Mammary epithelial cell (primary cell): ENCODE measurements at regions of chrX and their contacts with region 1.

Region 1: GRCh38 chrX:54044126-54044876 is at the start of gene PHF8:
- DNase-seq: peak; percentile 94
- H3K4me3 ChIP-seq: peak within 1 kb of the TSS; percentile 59 to 69 (median 63)
- H3K27ac ChIP-seq: peak within 1 kb of the TSS; percentile 73
- H3K4me1 ChIP-seq: peaks cover 8% of the 10 kb centered on the region
- H3K27me3 ChIP-seq: no peaks in the 10 kb centered on the region
- CTCF ChIP-seq: no peak
- total RNA-seq, gene PHF8: 16.0 to 23.8 TPM

Region 2: GRCh38 chrX:54182864-54183608 is 138.7 kb after region 1 on chrX and contains the start of gene FAM120C:
- CTCF ChIA-PET with region 1: no interaction called
- dilution Hi-C with region 1: no loop called
- in situ Hi-C with region 1: loop called in 1 of 2 experiments (anchors 25 kb)
- intact Hi-C with region 1: loop called (anchors 2 kb)
- DNase-seq: peak; percentile 62
- H3K4me3 ChIP-seq: peak within 1 kb of the TSS; percentile 35 to 74 (median 66)
- H3K27ac ChIP-seq: peak within 1 kb of the TSS; percentile 34
- H3K4me1 ChIP-seq: peaks cover 5% of the 10 kb centered on the region
- H3K27me3 ChIP-seq: no peaks in the 10 kb centered on the region
- CTCF ChIP-seq: no peak
- total RNA-seq, gene FAM120C: 3.5 to 7.1 TPM

Region 3: GRCh38 chrX:54248309-54248708 is 204.0 kb after region 1 on chrX:
- CTCF ChIA-PET with region 1: interaction called, 13 read pairs
- dilution Hi-C with region 1: no loop called
- in situ Hi-C with region 1: no loop called
- intact Hi-C with region 1: no loop called
- DNase-seq: peak; percentile 28
- H3K4me3 ChIP-seq: no peak overlapping the region
- H3K27ac ChIP-seq: no peak overlapping the region
- H3K4me1 ChIP-seq: no peaks in the 10 kb centered on the region
- H3K27me3 ChIP-seq: no peaks in the 10 kb centered on the region
- CTCF ChIP-seq: peak; percentile 32 to 61

Region 4: GRCh38 chrX:54439967-54440871 is 395.9 kb after region 1 on chrX and contains the start of gene TSR2:
- CTCF ChIA-PET with region 1: interaction called, 3 read pairs
- dilution Hi-C with region 1: no loop called
- in situ Hi-C with region 1: no loop called
- intact Hi-C with region 1: loop called (anchors 5 kb)
- DNase-seq: peak; percentile 77
- H3K4me3 ChIP-seq: peak within 1 kb of the TSS; percentile 61 to 73 (median 65)
- H3K27ac ChIP-seq: peak within 1 kb of the TSS; percentile 46
- H3K4me1 ChIP-seq: no peaks in the 10 kb centered on the region
- H3K27me3 ChIP-seq: no peaks in the 10 kb centered on the region
- CTCF ChIP-seq: peak in 1 of 2 donors; percentile 25
- total RNA-seq, gene TSR2: 8.0 to 33.8 TPM